Activated CD4-positive, alpha-beta T cell treated with anti-CD3 and anti-CD28 coated beads for 36 hours (primary cell): ENCODE measurements at regions of chr11 and their contacts with region 1.

Region 1: GRCh38 chr11:70397983-70398833 is at the start of gene CTTN:
- DNase-seq: peak; percentile 84
- ATAC-seq: peak; percentile 71
- H3K4me3 Mint-ChIP-seq: peak within 1 kb of the TSS; percentile 88
- H3K27ac Mint-ChIP-seq: peak within 1 kb of the TSS; percentile 89
- H3K4me1 Mint-ChIP-seq: peaks cover 30% of the 10 kb centered on the region
- H3K27me3 Mint-ChIP-seq: peaks cover 20% of the 10 kb centered on the region
- total RNA-seq, gene CTTN: 40.9 to 41.1 TPM

Region 2: GRCh38 chr11:69675811-69676371 is 722.3 kb before region 1 on chr11:
- CTCF ChIA-PET with region 1: no interaction called
- POLR2A ChIA-PET with region 1: no interaction called
- intact Hi-C with region 1: loop called in 1 of 2 experiments (anchors 1 kb)
- DNase-seq: no peak
- ATAC-seq: no peak
- H3K4me3 Mint-ChIP-seq: peak overlapping the region; percentile 89
- H3K27ac Mint-ChIP-seq: no peak overlapping the region
- H3K4me1 Mint-ChIP-seq: peaks cover 20% of the 10 kb centered on the region
- H3K27me3 Mint-ChIP-seq: peaks cover 2% of the 10 kb centered on the region

Region 3: DNA sequence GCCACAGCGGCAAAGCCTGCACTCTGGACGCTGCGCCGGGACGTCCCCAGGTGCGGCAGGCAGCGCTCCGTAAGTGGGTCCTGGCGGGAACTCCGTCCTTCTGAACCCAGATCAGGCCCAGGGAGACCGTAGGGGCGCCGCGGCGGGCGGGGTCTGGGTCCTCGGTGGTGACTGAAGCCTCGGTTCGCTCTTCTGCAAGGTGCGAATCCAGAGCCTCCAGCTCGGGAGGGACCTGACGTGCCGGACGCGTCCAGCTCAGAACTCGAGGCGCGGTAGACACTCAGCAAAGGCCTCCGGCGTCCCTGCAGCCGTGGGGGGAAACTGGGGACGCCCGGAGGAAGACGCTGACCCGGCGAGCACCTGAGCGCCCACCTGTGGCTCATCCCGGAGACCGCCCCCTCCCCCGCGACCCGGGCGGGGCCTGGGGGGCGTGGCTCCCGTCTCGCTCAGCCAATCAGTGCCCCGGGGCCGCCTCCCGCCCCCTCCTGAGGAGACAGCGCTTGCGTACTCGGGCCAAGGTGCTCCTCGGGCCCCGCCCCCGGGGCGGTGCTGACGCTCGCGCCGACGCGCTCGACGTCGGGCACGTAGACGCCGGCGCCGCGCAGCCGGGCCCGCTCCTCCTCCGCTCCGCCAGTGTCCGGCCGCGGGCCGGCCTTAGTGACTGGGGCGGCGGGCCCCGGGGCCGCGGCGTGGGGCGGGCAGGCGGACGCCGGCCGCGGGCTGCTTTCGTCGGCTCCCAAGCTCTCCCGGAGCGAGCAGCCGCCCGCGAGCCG is 127.9 kb before region 1 on chr11 and contains the start of gene PPFIA1:
- CTCF ChIA-PET with region 1: no interaction called
- POLR2A ChIA-PET with region 1: no interaction called
- intact Hi-C with region 1: loop called in 1 of 2 experiments (anchors 1 kb)
- DNase-seq: peak; percentile 97
- ATAC-seq: peak; percentile 95
- H3K4me3 Mint-ChIP-seq: peak within 1 kb of the TSS; percentile 92
- H3K27ac Mint-ChIP-seq: peak within 1 kb of the TSS; percentile 89
- H3K4me1 Mint-ChIP-seq: peaks cover 31% of the 10 kb centered on the region
- H3K27me3 Mint-ChIP-seq: peaks cover 10% of the 10 kb centered on the region
- total RNA-seq, gene PPFIA1: 26.5 to 40.5 TPM

Region 4: GRCh38 chr11:70364745-70365543 is 33.3 kb before region 1 on chr11:
- CTCF ChIA-PET with region 1: no interaction called
- POLR2A ChIA-PET with region 1: no interaction called
- intact Hi-C with region 1: loop called (anchors 1 to 2 kb)
- DNase-seq: peak; percentile 87
- ATAC-seq: peak; percentile 86
- H3K4me3 Mint-ChIP-seq: peak overlapping the region; percentile 54
- H3K27ac Mint-ChIP-seq: peak overlapping the region; percentile 93
- H3K4me1 Mint-ChIP-seq: peaks cover 30% of the 10 kb centered on the region
- H3K27me3 Mint-ChIP-seq: no peaks in the 10 kb centered on the region

Region 5: GRCh38 chr11:71787098-71787823 is 1389.1 kb after region 1 on chr11:
- CTCF ChIA-PET with region 1: no interaction called
- POLR2A ChIA-PET with region 1: no interaction called
- intact Hi-C with region 1: loop called in 1 of 2 experiments (anchors 2 kb)
- DNase-seq: peak; percentile 97
- ATAC-seq: peak; percentile 97
- H3K4me3 Mint-ChIP-seq: peak overlapping the region; percentile 84
- H3K27ac Mint-ChIP-seq: peak overlapping the region; percentile 95
- H3K4me1 Mint-ChIP-seq: peaks cover 24% of the 10 kb centered on the region
- H3K27me3 Mint-ChIP-seq: no peaks in the 10 kb centered on the region